Left ventricle myocardium inferior (tissue), 1 donor: ENCODE measurements at regions of chr11 and their contacts with region 1.

Region 1: DNA sequence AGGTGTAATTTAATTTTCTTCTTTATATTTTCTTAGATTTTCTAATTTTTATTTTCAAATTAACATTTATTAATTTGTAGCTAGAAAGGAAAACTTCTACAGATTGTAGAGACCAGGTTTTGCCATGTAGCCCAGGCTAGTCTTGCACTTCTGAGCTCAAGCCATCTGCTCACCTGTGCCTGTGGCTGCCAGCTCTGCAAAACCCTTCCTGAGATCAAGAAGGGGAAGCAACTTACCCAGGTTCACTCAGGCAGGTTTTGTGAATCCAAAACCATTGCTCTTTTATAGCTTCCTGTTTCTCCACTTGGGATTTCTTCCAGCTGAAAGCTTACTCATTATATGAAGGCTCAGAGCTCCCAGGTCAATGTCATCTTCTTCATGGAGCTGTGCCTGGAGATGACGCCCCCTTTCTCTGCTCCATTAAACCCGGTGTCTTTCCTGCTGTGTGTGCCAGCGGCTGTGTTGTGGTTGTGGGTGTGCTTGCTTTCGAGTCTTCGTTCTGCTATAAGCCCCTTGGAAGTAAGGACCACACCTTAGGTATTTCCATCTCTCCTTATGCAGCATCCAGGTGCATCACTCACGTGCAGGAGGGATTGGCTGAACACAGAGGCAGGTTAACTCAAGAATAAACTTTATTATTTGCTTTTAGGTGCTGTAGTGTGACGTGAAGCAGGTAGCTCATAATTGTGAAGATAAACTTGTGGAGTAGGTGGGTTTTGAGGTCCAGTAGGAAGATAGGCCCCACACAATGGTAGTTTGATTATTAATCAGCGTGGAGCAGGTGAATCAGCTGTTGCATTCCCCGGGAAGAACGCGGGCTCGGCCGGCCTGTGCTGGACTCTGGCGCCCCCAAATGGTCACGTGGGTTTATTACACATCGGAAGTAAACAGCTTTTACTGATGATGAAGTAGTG is 42.2 kb upstream of the INCENP start:
- DNase-seq: peak; percentile 79
- H3K4me3 ChIP-seq: no peak overlapping the region
- H3K27ac ChIP-seq: no peak overlapping the region
- H3K4me1 ChIP-seq: peaks cover 7% of the 10 kb centered on the region
- H3K27me3 ChIP-seq: no peaks in the 10 kb centered on the region
- CTCF ChIP-seq: peak; percentile 94

Region 2: GRCh38 chr11:61899146-61899841 is 182.3 kb before region 1 on chr11:
- intact Hi-C with region 1: loop called (anchors 5 kb)
- DNase-seq: peak; percentile 83
- H3K4me3 ChIP-seq: no peak overlapping the region
- H3K27ac ChIP-seq: peak overlapping the region; percentile 61
- H3K4me1 ChIP-seq: peaks cover 22% of the 10 kb centered on the region
- H3K27me3 ChIP-seq: no peaks in the 10 kb centered on the region
- CTCF ChIP-seq: peak; percentile 100

Region 3: DNA sequence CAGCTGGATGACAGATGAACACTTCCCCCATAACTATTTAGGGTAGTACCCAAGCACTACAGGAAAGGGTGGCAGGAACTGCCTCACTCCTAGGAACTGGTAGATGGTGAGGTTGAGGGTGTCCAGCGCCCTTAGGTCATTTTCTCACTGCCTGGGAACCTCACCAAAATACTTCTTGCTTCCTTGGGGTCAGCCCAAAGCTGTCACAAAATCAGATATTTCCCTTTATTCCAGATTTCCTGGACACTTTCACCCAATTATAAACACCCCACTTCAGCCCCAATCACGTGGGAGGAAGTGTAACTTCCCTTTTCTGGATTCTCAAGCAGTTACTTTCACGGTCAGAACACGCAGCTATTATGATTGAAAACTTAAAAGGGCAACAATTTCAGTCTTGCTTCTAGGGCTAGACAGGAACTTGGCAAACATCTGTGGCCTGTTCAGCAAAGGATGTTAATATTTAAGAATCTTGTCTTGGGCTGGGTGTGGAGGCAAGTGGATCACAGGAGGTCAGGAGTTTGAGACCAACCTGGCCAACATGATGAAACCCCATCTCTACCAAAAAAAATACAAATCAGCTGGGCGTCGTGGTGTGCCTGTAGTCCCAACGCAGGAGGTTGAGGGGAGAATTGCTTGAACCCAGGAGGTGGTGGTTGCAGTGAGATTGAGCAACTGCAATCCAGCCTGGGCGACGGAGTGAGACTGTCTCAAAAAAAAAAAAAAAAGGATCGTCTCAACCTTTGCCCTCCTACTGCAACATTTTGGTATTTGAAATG is 118.2 kb before region 1 on chr11:
- intact Hi-C with region 1: loop called (anchors 5 kb)
- DNase-seq: no peak
- H3K4me3 ChIP-seq: peak overlapping the region; percentile 97
- H3K27ac ChIP-seq: peak overlapping the region; percentile 100
- H3K4me1 ChIP-seq: peaks cover 80% of the 10 kb centered on the region
- H3K27me3 ChIP-seq: no peaks in the 10 kb centered on the region
- CTCF ChIP-seq: no peak